ENCODE measurements at regions of chr2 and their contacts with region 1.

Region 1: GRCh38 chr2:222707689-222708525 is 36.4 kb downstream of the MOGAT1 start:
- DNase-seq: peak; percentile 81
- H3K4me3 ChIP-seq: no peak overlapping the region
- H3K27ac ChIP-seq: no peak overlapping the region
- H3K4me1 ChIP-seq: peaks cover 21% of the 10 kb centered on the region
- H3K27me3 ChIP-seq: no peaks in the 10 kb centered on the region
- CTCF ChIP-seq: peak; percentile 95

Region 2: GRCh38 chr2:222903234-222904220 is 195.6 kb after region 1 on chr2:
- intact Hi-C with region 1: loop called (anchors 2 kb)
- DNase-seq: no peak
- H3K4me3 ChIP-seq: no peak overlapping the region
- H3K27ac ChIP-seq: peak overlapping the region; percentile 9
- H3K4me1 ChIP-seq: peaks cover 75% of the 10 kb centered on the region
- H3K27me3 ChIP-seq: no peaks in the 10 kb centered on the region
- CTCF ChIP-seq: peak; percentile 81